IMR-90 (cell line): ENCODE measurements at regions of chr9 and their contacts with region 1.

Region 1: DNA sequence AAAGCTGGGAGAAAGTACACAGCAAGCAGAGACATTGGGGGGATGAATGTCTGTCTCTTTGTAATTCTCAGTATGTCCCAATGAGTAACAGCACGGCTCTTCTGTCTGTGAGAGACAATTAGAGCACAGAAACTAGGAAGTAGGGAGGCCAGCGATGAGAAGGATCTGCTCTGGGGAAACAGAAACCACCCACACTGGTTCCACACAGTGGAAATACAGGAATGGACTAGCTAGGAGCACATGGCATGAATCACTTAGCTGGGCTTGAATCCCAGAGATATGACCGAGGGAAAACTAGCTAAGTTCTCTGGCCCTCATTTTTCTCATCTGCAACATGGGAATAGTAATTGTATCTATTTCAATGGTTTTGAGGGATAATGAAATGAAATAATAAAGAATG is 895.9 kb downstream of the TLE4 start:
- DNase-seq: peak; percentile 26
- ATAC-seq: no peak
- H3K4me3 ChIP-seq: no peak overlapping the region
- H3K27ac ChIP-seq: no peak overlapping the region
- H3K4me1 ChIP-seq: no peaks in the 10 kb centered on the region
- H3K27me3 ChIP-seq: no peaks in the 10 kb centered on the region
- CTCF ChIP-seq: no peak
- POLR2A ChIP-seq: no peak
- RAD21 ChIP-seq: no peak

Region 2: DNA sequence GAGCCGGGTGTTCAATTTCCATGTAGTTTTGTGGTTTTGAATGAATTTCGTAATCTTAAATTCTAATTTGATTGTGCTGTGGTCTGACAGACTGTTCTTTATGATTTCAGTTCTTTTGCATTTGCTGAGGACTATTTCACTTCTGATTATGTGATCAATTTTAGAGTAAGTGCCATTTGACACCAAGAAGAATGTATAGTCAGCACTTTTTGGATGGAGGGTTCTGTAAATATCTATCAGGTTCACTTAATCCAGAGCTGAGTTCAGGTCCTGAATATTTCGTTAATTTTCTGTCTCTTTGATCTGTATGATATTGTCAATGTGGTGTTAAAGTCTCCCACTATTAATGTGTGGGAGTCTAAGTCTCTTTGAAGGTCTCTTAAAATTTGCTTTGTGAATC is 49.0 kb after region 1 on chr9:
- CTCF ChIA-PET with region 1: no interaction called
- POLR2A ChIA-PET with region 1: no interaction called
- dilution Hi-C with region 1: no loop called
- in situ Hi-C with region 1: no loop called
- intact Hi-C with region 1: loop called (anchors 2 kb)
- DNase-seq: no peak
- ATAC-seq: no peak
- H3K4me3 ChIP-seq: no peak overlapping the region
- H3K27ac ChIP-seq: no peak overlapping the region
- H3K4me1 ChIP-seq: no peaks in the 10 kb centered on the region
- H3K27me3 ChIP-seq: no peaks in the 10 kb centered on the region
- CTCF ChIP-seq: no peak
- POLR2A ChIP-seq: no peak
- RAD21 ChIP-seq: no peak